Mammary epithelial cell (primary cell): ENCODE measurements at regions of chr12 and their contacts with region 1.

Region 1: DNA sequence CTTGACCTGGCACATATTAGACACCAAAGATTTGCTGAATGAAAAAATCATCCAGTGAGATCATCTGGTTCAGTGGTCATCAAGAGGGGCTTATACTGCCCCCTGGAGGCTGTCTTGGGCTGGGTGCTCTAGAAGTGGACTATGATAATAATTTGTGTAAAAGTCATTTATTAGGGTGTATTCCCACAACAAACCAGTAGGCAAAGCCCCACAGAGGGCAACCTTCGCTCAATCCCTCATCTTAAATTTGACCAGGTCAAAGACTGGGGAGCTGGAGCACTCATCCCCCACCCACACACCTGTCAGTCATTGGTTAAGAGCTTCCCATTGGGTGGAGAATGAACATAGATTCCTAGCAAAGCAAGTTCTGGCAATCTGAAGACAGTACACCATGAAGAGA is 20.0 kb upstream of the FICD start:
- DNase-seq: peak; percentile 22
- H3K4me3 ChIP-seq: no peak overlapping the region
- H3K27ac ChIP-seq: no peak overlapping the region
- H3K4me1 ChIP-seq: no peaks in the 10 kb centered on the region
- H3K27me3 ChIP-seq: peaks cover 6% of the 10 kb centered on the region
- CTCF ChIP-seq: peak; percentile 71 to 92

Region 2: GRCh38 chr12:107679336-107679735 is 815.7 kb before region 1 on chr12:
- CTCF ChIA-PET with region 1: no interaction called
- dilution Hi-C with region 1: no loop called
- in situ Hi-C with region 1: no loop called
- intact Hi-C with region 1: loop called (anchors 5 kb)
- DNase-seq: no peak
- H3K4me3 ChIP-seq: no peak overlapping the region
- H3K27ac ChIP-seq: no peak overlapping the region
- H3K4me1 ChIP-seq: no peaks in the 10 kb centered on the region
- H3K27me3 ChIP-seq: no peaks in the 10 kb centered on the region
- CTCF ChIP-seq: no peak

Region 3: GRCh38 chr12:107992870-107993451 is 502.1 kb before region 1 on chr12:
- CTCF ChIA-PET with region 1: interaction called, 3 read pairs
- dilution Hi-C with region 1: no loop called
- in situ Hi-C with region 1: no loop called
- intact Hi-C with region 1: loop called (anchors 1 kb)
- DNase-seq: peak; percentile 54
- H3K4me3 ChIP-seq: no peak overlapping the region
- H3K27ac ChIP-seq: no peak overlapping the region
- H3K4me1 ChIP-seq: no peaks in the 10 kb centered on the region
- H3K27me3 ChIP-seq: no peaks in the 10 kb centered on the region
- CTCF ChIP-seq: peak; percentile 43 to 71

Region 4: GRCh38 chr12:108193917-108194316 is 301.1 kb before region 1 on chr12:
- CTCF ChIA-PET with region 1: no interaction called
- dilution Hi-C with region 1: no loop called
- in situ Hi-C with region 1: no loop called
- intact Hi-C with region 1: loop called (anchors 5 kb)
- DNase-seq: no peak
- H3K4me3 ChIP-seq: no peak overlapping the region
- H3K27ac ChIP-seq: no peak overlapping the region
- H3K4me1 ChIP-seq: no peaks in the 10 kb centered on the region
- H3K27me3 ChIP-seq: no peaks in the 10 kb centered on the region
- CTCF ChIP-seq: peak; percentile 71 to 84

Region 5: GRCh38 chr12:108305520-108305919 is 189.5 kb before region 1 on chr12:
- CTCF ChIA-PET with region 1: no interaction called
- dilution Hi-C with region 1: no loop called
- in situ Hi-C with region 1: no loop called
- intact Hi-C with region 1: loop called (anchors 10 kb)
- DNase-seq: peak; percentile 73
- H3K4me3 ChIP-seq: peak overlapping the region in 1 of 3 experiments; percentile 2
- H3K27ac ChIP-seq: no peak overlapping the region
- H3K4me1 ChIP-seq: peaks cover 27% of the 10 kb centered on the region
- H3K27me3 ChIP-seq: no peaks in the 10 kb centered on the region
- CTCF ChIP-seq: no peak